ENCODE measurements at regions of chr11 and their contacts with region 1.

Region 1: GRCh38 chr11:62678770-62679696 is at the start of gene UBXN1:
- DNase-seq: peak; percentile 87 to 88
- H3K4me3 ChIP-seq: peak within 1 kb of the TSS; percentile 95
- H3K4me3 Mint-ChIP-seq: peak within 1 kb of the TSS; percentile 81
- H3K27ac Mint-ChIP-seq: peak within 1 kb of the TSS; percentile 91
- H3K4me1 ChIP-seq: no peaks in the 10 kb centered on the region; the same call in 1 of the 2 replicates
- H3K4me1 Mint-ChIP-seq: peaks cover 15% of the 10 kb centered on the region
- H3K27me3 ChIP-seq: no peaks in the 10 kb centered on the region
- H3K27me3 Mint-ChIP-seq: no peaks in the 10 kb centered on the region
- CTCF ChIP-seq: no peak
- total RNA-seq, gene UBXN1: 116 and 118 TPM in 2 replicates

Region 2: GRCh38 chr11:62694455-62695167 is 15.6 kb after region 1 on chr11:
- CTCF ChIA-PET with region 1: interaction called, 10 read pairs
- POLR2A ChIA-PET with region 1: no interaction called
- intact Hi-C with region 1: loop called (anchors 1 kb)
- DNase-seq: peak; percentile 70 to 77
- H3K4me3 ChIP-seq: no peak overlapping the region
- H3K4me3 Mint-ChIP-seq: no peak overlapping the region
- H3K27ac Mint-ChIP-seq: no peak overlapping the region
- H3K4me1 ChIP-seq: no peaks in the 10 kb centered on the region
- H3K4me1 Mint-ChIP-seq: peaks cover 6% of the 10 kb centered on the region
- H3K27me3 ChIP-seq: no peaks in the 10 kb centered on the region
- H3K27me3 Mint-ChIP-seq: no peaks in the 10 kb centered on the region
- CTCF ChIP-seq: peak; percentile 64 to 82

Region 3: DNA sequence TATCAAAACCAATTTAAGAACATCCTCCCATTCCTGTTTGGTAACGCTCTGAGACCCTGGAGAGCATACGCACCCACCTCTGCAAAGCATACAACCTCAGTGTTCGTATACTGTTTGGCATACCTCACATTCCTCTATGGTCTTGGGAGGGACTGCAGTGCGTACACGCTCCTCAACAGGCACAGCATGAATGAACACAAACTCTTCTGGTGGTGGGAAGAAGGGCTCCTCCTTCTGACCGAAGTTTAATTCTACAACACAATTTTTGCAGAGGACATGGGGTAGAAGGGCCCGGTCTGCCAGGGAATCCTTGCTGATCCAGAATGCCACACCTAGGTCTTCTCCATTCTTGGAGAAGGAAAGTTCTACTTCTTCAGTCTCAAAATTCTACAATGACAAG is 43.0 kb after region 1 on chr11:
- CTCF ChIA-PET with region 1: no interaction called
- POLR2A ChIA-PET with region 1: interaction called, 5 read pairs
- intact Hi-C with region 1: loop called (anchors 1 kb)
- DNase-seq: peak; percentile 73 to 80
- H3K4me3 ChIP-seq: no peak overlapping the region
- H3K4me3 Mint-ChIP-seq: peak overlapping the region; percentile 25
- H3K27ac Mint-ChIP-seq: peak overlapping the region; percentile 37
- H3K4me1 ChIP-seq: peaks cover 23% of the 10 kb centered on the region
- H3K4me1 Mint-ChIP-seq: peaks cover 36% of the 10 kb centered on the region
- H3K27me3 ChIP-seq: no peaks in the 10 kb centered on the region
- H3K27me3 Mint-ChIP-seq: no peaks in the 10 kb centered on the region
- CTCF ChIP-seq: peak; percentile 49 to 54

Region 4: DNA sequence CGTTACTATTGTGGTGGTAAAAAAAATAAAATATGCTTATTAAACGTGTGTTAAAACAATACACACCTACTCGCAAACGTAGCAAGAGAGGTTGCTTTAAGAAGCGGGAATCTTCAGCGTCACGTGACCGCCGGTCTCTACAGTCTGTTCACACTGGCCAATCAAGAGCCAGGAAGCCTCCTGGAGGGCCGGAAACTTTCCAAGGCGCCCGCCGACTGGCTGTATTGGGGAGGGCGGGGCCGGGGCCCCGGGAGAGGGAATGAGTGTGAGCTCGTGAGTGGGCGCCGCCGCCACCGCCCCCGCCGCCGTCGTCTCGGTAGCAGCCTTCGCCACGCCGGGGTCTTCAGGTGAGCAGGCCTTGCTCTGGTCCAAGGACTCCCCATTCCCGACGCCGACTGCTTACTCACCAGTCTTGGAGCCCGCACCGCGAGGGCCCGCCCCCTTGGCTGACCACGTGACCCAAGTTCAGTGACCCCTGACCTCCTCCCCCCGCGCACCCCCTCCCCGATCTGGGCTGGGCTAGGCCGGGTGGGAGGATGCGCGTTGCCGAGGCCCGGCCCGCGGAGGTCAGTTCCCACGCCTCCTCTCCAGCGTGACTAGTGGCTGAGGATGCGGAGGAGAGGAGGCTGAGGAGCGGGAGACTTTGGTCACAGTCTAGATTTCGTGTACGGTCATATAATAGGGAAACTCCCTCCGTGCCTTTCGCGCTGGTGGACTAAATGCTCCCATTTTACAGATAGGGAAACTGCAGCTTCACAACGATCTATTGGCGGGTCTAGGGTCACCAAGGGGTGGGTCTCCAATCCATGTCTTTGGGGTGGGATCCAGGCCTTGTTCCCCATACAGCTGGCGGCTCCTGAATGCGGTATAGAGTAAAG is 92.3 kb after region 1 on chr11 and contains the start of gene TAF6L:
- CTCF ChIA-PET with region 1: interaction called, 12 read pairs
- POLR2A ChIA-PET with region 1: interaction called, 6 read pairs
- intact Hi-C with region 1: no loop called
- DNase-seq: peak; percentile 97 to 99
- H3K4me3 ChIP-seq: peak within 1 kb of the TSS; percentile 81
- H3K4me3 Mint-ChIP-seq: peak within 1 kb of the TSS; percentile 92
- H3K27ac Mint-ChIP-seq: peak within 1 kb of the TSS; percentile 99
- H3K4me1 ChIP-seq: peaks cover 6% of the 10 kb centered on the region
- H3K4me1 Mint-ChIP-seq: no peaks in the 10 kb centered on the region
- H3K27me3 ChIP-seq: no peaks in the 10 kb centered on the region
- H3K27me3 Mint-ChIP-seq: no peaks in the 10 kb centered on the region
- CTCF ChIP-seq: no peak
- total RNA-seq, gene TAF6L: 26.8 and 30.1 TPM in 2 replicates